OCI-LY7 (cell line): ENCODE measurements at regions of chr16 and their contacts with region 1.

Region 1: DNA sequence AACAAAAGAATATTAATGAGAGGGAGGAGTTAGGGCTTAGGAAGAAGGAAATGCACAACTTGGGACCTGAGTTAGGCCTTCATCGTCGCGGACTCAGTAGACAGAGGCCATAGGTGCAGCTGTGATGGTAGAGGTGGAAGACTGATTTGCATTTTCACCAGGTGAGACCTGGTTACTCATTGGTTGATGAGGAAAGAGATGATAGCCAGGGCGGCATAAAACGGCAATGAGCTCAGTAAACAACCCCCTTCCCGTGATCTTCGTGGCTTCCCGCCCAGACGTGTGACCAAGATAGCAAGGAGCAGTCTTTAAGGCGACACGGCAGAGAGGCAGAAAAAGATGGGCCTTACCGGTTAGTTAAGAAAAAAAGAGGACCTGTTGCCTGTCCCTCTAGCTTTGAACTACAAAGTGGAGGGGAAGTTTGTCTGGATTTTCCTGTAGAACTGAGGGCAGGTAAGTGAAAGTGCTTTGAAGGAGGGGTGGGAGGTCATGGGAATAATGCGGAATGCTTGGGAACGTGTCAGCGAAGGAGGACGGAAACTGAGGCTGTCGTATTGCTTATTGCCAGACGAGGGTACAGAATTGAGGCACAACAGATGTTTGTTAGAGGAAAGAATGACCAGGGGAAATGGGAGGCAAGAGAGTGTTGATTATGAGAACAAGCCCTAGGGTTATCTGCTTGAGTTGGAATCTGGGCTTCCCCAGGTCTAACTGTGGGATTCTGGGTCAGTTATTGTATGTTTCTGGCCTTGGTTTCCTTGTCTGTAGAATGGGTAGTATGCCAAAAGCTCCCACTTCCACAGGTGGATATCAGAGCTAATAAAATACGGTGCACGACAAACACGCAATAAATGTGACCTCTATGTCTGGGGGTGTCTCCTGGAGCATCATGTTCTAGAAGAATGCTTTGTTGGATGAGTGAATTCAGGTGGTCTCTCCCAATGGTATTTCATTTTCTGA is at the start of gene TMC5:
- DNase-seq: no peak
- H3K4me3 ChIP-seq: no peak within 1 kb of the TSS
- H3K27ac ChIP-seq: no peak within 1 kb of the TSS
- H3K4me1 ChIP-seq: no peaks in the 10 kb centered on the region
- CTCF ChIP-seq: no peak
- total RNA-seq, gene TMC5: not detected in 2 replicates

Region 2: DNA sequence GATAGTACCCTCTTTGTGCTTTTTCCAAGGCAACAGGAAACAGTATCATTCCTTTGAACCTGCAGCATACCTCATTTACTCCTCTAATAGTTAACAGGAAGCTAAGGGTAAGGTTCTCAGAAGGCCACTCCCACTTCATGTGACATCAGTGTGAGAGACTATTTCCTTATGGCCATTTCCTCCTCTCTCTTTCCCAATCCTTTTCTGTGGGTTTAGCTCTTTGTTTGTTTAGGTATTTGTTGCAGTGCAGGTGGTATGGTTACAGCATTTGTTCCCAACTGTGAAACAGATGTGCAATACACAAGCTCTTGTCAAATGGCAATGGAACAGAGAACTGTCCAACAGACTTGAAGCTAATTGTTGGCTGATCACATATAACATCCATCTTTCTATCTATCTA is 14.5 kb after region 1 on chr16:
- CTCF ChIA-PET with region 1: no interaction called
- POLR2A ChIA-PET with region 1: interaction called, 10 read pairs
- intact Hi-C with region 1: no loop called
- DNase-seq: no peak
- H3K4me3 ChIP-seq: no peak overlapping the region
- H3K27ac ChIP-seq: no peak overlapping the region
- H3K4me1 ChIP-seq: peaks cover 4% of the 10 kb centered on the region
- CTCF ChIP-seq: no peak